Endothelial cell of umbilical vein (primary cell): ENCODE measurements at regions of chr2 and their contacts with region 1.

Region 1: GRCh38 chr2:85707304-85707703 is 13.1 kb downstream of the GNLY start:
- DNase-seq: peak; percentile 81
- H3K4me3 ChIP-seq: no peak overlapping the region
- H3K27ac ChIP-seq: no peak overlapping the region
- H3K4me1 ChIP-seq: peaks cover 18% of the 10 kb centered on the region
- H3K27me3 ChIP-seq: no peaks in the 10 kb centered on the region
- CTCF ChIP-seq: peak; percentile 77 to 87
- POLR2A ChIP-seq: no peak

Region 2: GRCh38 chr2:85635636-85636035 is 71.7 kb before region 1 on chr2:
- CTCF ChIA-PET with region 1: interaction called, 137 read pairs
- POLR2A ChIA-PET with region 1: no interaction called
- dilution Hi-C with region 1: no loop called
- intact Hi-C with region 1: loop called (anchors 1 kb)
- DNase-seq: no peak
- H3K4me3 ChIP-seq: no peak overlapping the region
- H3K27ac ChIP-seq: no peak overlapping the region
- H3K4me1 ChIP-seq: no peaks in the 10 kb centered on the region
- H3K27me3 ChIP-seq: no peaks in the 10 kb centered on the region
- CTCF ChIP-seq: no peak
- POLR2A ChIP-seq: no peak

Region 3: GRCh38 chr2:85648619-85649018 is 58.7 kb before region 1 on chr2:
- CTCF ChIA-PET with region 1: interaction called, 138 read pairs
- POLR2A ChIA-PET with region 1: no interaction called
- dilution Hi-C with region 1: no loop called
- intact Hi-C with region 1: loop called (anchors 1 kb)
- DNase-seq: peak; percentile 66
- H3K4me3 ChIP-seq: no peak overlapping the region
- H3K27ac ChIP-seq: peak overlapping the region; percentile 42
- H3K4me1 ChIP-seq: peaks cover 16% of the 10 kb centered on the region
- H3K27me3 ChIP-seq: no peaks in the 10 kb centered on the region
- CTCF ChIP-seq: peak; percentile 65 to 72
- POLR2A ChIP-seq: no peak

Region 4: GRCh38 chr2:85678794-85679672 is 28.3 kb before region 1 on chr2:
- CTCF ChIA-PET with region 1: interaction called, 103 read pairs
- POLR2A ChIA-PET with region 1: no interaction called
- dilution Hi-C with region 1: no loop called
- intact Hi-C with region 1: loop called (anchors 1 kb)
- DNase-seq: peak; percentile 86
- H3K4me3 ChIP-seq: no peak overlapping the region
- H3K27ac ChIP-seq: no peak overlapping the region
- H3K4me1 ChIP-seq: peaks cover 25% of the 10 kb centered on the region
- H3K27me3 ChIP-seq: no peaks in the 10 kb centered on the region
- CTCF ChIP-seq: peak; percentile 98
- POLR2A ChIP-seq: no peak

Region 5: GRCh38 chr2:85694052-85695025 is 13.0 kb before region 1 on chr2 and contains the start of gene GNLY:
- CTCF ChIA-PET with region 1: interaction called, 15 read pairs
- POLR2A ChIA-PET with region 1: no interaction called
- dilution Hi-C with region 1: no loop called
- intact Hi-C with region 1: no loop called
- DNase-seq: no peak
- H3K4me3 ChIP-seq: no peak within 1 kb of the TSS
- H3K27ac ChIP-seq: no peak within 1 kb of the TSS
- H3K4me1 ChIP-seq: no peaks in the 10 kb centered on the region
- H3K27me3 ChIP-seq: no peaks in the 10 kb centered on the region
- CTCF ChIP-seq: no peak
- POLR2A ChIP-seq: no peak
- total RNA-seq, gene GNLY: not detected in 2 replicates

Region 6: GRCh38 chr2:85750587-85751575 is 43.6 kb after region 1 on chr2:
- CTCF ChIA-PET with region 1: interaction called, 3 read pairs
- POLR2A ChIA-PET with region 1: no interaction called
- dilution Hi-C with region 1: no loop called
- intact Hi-C with region 1: loop called (anchors 1 kb)
- DNase-seq: peak; percentile 72
- H3K4me3 ChIP-seq: no peak overlapping the region
- H3K27ac ChIP-seq: no peak overlapping the region
- H3K4me1 ChIP-seq: peaks cover 6% of the 10 kb centered on the region
- H3K27me3 ChIP-seq: no peaks in the 10 kb centered on the region
- CTCF ChIP-seq: peak; percentile 83 to 85
- POLR2A ChIP-seq: no peak